Activated CD8-positive, alpha-beta T cell treated with anti-CD3 and anti-CD28 coated beads, Interleukin-2, amount 10 ng/mL, durations not matched to agents 7 days and 5 days (primary cell): ENCODE measurements at regions of chr12 and their contacts with region 1.

Region 1: GRCh38 chr12:130049666-130050065 is 112.6 kb upstream of the FZD10 start:
- DNase-seq: no peak
- ATAC-seq: no peak
- H3K4me3 Mint-ChIP-seq: no peak overlapping the region
- H3K27ac Mint-ChIP-seq: no peak overlapping the region
- H3K4me1 Mint-ChIP-seq: peaks cover 13% of the 10 kb centered on the region
- H3K27me3 Mint-ChIP-seq: peaks cover 21% of the 10 kb centered on the region

Region 2: GRCh38 chr12:129570796-129571400 is 478.8 kb before region 1 on chr12:
- CTCF ChIA-PET with region 1: no interaction called
- POLR2A ChIA-PET with region 1: no interaction called
- DNase-seq: no peak
- ATAC-seq: no peak
- H3K4me3 Mint-ChIP-seq: no peak overlapping the region
- H3K27ac Mint-ChIP-seq: no peak overlapping the region
- H3K4me1 Mint-ChIP-seq: no peaks in the 10 kb centered on the region
- H3K27me3 Mint-ChIP-seq: no peaks in the 10 kb centered on the region

Region 3: DNA sequence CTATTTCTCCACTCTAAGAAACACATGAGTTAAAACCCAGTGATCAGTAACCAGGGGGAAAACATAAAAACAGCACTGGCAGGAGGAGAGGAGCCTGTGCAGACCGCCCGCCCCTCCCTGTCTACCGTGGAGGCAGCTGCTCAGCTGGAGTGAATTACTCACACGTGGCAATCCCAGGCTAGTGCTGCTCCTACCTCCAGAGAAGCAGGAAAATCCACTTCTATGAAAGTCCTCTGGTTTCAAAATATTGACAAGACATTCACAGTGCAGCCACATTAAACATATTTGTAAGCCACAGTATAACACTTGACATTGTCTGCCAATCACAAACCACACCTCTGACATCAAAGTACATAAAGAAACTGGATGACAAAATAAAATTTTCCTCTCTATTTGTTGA is 162.5 kb before region 1 on chr12:
- CTCF ChIA-PET with region 1: no interaction called
- POLR2A ChIA-PET with region 1: no interaction called
- DNase-seq: no peak
- ATAC-seq: no peak
- H3K4me3 Mint-ChIP-seq: no peak overlapping the region
- H3K27ac Mint-ChIP-seq: no peak overlapping the region
- H3K4me1 Mint-ChIP-seq: no peaks in the 10 kb centered on the region
- H3K27me3 Mint-ChIP-seq: no peaks in the 10 kb centered on the region

Region 4: DNA sequence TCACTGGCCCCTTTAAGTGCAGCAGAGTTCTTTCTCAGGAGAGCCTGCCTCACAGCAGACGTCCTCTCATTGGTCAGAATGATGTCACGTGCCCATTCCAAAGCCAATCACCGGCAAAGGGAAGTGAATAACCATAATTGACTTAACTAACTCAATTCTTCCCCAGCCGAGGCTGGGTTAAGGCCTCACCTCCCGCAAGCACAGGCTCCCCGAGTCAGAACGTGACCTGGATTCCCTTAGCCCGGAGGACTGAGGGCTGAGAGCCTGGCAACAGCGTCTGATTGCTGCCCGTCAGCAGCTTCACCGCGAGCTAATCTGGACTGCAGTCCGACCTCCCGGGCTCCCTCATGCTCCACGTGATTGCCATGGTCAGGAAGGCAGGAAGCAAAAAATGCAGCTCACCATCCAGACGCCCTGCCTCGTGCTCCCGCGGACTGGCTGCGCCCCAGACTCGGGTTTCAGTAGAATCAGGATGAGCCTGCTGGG is 20.5 kb after region 1 on chr12:
- CTCF ChIA-PET with region 1: no interaction called
- POLR2A ChIA-PET with region 1: no interaction called
- DNase-seq: no peak
- ATAC-seq: no peak
- H3K4me3 Mint-ChIP-seq: no peak overlapping the region
- H3K27ac Mint-ChIP-seq: no peak overlapping the region
- H3K4me1 Mint-ChIP-seq: no peaks in the 10 kb centered on the region
- H3K27me3 Mint-ChIP-seq: no peaks in the 10 kb centered on the region

Region 5: GRCh38 chr12:130137046-130138018 is 87.7 kb after region 1 on chr12:
- CTCF ChIA-PET with region 1: no interaction called
- POLR2A ChIA-PET with region 1: no interaction called
- DNase-seq: no peak
- ATAC-seq: no peak
- H3K4me3 Mint-ChIP-seq: no peak overlapping the region
- H3K27ac Mint-ChIP-seq: no peak overlapping the region
- H3K4me1 Mint-ChIP-seq: no peaks in the 10 kb centered on the region
- H3K27me3 Mint-ChIP-seq: no peaks in the 10 kb centered on the region

Region 6: GRCh38 chr12:130335517-130336392 is 286.1 kb after region 1 on chr12:
- CTCF ChIA-PET with region 1: interaction called, 11 read pairs
- POLR2A ChIA-PET with region 1: no interaction called
- DNase-seq: peak; percentile 42
- ATAC-seq: no peak
- H3K4me3 Mint-ChIP-seq: no peak overlapping the region
- H3K27ac Mint-ChIP-seq: no peak overlapping the region
- H3K4me1 Mint-ChIP-seq: peaks cover 4% of the 10 kb centered on the region
- H3K27me3 Mint-ChIP-seq: peaks cover 8% of the 10 kb centered on the region